Mammary epithelial cell (primary cell): ENCODE measurements at regions of chr1 and their contacts with region 1.

Region 1: DNA sequence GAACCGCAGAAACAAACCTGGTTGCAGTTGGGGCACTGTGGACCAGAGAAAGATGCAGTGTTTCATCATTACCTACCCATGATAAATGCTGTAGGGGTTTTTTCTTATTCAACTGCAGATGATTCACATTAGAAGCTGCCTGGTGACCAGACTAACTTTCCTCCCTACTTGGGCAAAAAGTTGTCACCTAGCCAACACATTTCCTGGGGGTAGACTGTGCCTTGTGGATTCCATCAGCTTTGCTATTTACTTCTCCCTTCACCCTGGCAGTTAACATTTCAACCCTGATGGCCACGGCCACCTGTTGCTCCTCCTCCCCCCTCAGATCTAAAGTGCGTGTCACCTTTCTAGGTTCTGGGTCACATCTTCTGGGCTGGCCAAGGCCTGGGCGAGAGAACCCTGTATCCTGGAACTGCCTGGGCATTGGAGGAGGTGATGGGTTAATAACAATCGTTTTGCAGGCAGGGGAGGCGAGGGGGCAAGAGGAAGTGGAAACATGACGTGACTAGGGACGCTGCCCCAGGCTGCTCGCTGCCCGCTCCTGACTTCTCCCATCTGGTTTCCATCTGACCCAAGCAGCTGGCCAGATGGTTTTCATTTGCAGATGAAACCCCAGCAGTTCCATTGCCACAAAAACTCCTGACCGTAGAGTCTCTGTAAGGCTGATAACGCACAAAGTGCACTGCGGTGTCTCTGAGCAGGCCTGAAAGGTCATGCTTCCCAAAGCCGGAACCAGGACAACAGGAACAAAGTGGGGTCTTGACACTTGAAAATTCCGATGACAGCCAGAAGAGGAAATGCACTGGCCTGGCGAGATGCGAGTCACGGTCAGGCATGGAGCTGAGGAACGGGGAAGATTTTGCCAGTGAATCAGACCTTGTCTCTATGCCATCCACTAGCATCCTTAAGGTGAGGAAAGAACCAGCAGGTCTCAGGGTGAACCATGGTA is 36.6 kb downstream of the CAPZB start:
- DNase-seq: peak; percentile 84
- H3K4me3 ChIP-seq: no peak overlapping the region
- H3K27ac ChIP-seq: peak overlapping the region; percentile 56
- H3K4me1 ChIP-seq: peaks cover 65% of the 10 kb centered on the region
- H3K27me3 ChIP-seq: no peaks in the 10 kb centered on the region
- CTCF ChIP-seq: no peak

Region 2: DNA sequence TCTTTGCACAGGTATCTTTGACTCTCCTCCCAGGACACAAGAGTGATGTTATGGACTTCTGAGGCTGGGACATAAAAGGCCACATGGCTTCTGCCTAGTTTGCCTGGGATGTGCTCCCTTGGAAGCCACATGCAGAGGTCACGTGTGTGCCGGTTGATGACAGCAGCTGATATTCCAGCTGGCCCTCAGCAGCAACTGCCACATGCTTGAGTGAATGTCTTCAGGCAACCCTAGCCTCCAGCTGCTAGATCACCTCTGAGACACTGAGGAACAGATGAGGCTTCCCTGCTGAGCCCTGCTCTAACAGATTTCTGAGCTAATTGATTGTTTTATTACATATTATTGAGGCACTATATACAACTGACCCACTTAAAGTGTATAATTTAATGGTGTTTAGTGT is 148.6 kb before region 1 on chr1:
- CTCF ChIA-PET with region 1: no interaction called
- dilution Hi-C with region 1: no loop called
- in situ Hi-C with region 1: no loop called
- intact Hi-C with region 1: no loop called
- DNase-seq: no peak
- H3K4me3 ChIP-seq: no peak overlapping the region
- H3K27ac ChIP-seq: no peak overlapping the region
- H3K4me1 ChIP-seq: no peaks in the 10 kb centered on the region
- H3K27me3 ChIP-seq: no peaks in the 10 kb centered on the region
- CTCF ChIP-seq: no peak

Region 3: DNA sequence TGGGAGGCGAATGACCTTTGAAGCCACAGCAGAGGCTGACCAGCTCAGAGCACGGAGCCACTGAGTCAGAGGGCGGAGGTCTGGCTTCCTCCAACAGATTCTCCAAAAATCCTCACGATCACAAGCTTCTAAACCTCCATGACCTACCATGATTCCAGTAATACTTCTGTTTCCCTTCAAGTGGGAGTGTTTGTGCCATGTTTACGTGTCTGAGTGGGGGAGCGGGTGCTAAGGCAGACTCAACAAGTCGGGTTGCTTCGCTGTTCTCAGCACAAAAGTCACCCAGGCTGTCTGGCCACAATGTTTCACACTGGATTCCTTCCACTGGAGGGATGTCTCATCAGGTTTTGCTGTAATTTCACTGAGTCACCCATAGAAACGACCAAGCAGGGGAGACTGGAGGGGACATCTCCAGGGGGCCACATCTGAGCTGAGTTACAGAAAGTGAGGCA is 50.4 kb before region 1 on chr1:
- CTCF ChIA-PET with region 1: no interaction called
- dilution Hi-C with region 1: no loop called
- in situ Hi-C with region 1: no loop called
- intact Hi-C with region 1: loop called (anchors 5 kb)
- DNase-seq: peak; percentile 45
- H3K4me3 ChIP-seq: no peak overlapping the region
- H3K27ac ChIP-seq: no peak overlapping the region
- H3K4me1 ChIP-seq: peaks cover 17% of the 10 kb centered on the region
- H3K27me3 ChIP-seq: no peaks in the 10 kb centered on the region
- CTCF ChIP-seq: peak; percentile 21 to 30

Region 4: GRCh38 chr1:19414515-19415121 is 34.1 kb before region 1 on chr1:
- CTCF ChIA-PET with region 1: no interaction called
- dilution Hi-C with region 1: loop called (anchors 5 kb)
- in situ Hi-C with region 1: no loop called
- intact Hi-C with region 1: no loop called
- DNase-seq: no peak
- H3K4me3 ChIP-seq: no peak overlapping the region
- H3K27ac ChIP-seq: no peak overlapping the region
- H3K4me1 ChIP-seq: no peaks in the 10 kb centered on the region
- H3K27me3 ChIP-seq: no peaks in the 10 kb centered on the region
- CTCF ChIP-seq: no peak

Region 5: GRCh38 chr1:19493547-19493946 is 44.8 kb after region 1 on chr1:
- CTCF ChIA-PET with region 1: interaction called, 10 read pairs
- dilution Hi-C with region 1: no loop called
- in situ Hi-C with region 1: no loop called
- intact Hi-C with region 1: no loop called
- DNase-seq: no peak
- H3K4me3 ChIP-seq: no peak overlapping the region
- H3K27ac ChIP-seq: no peak overlapping the region
- H3K4me1 ChIP-seq: no peaks in the 10 kb centered on the region
- H3K27me3 ChIP-seq: no peaks in the 10 kb centered on the region
- CTCF ChIP-seq: no peak

Region 6: GRCh38 chr1:19525607-19526545 is 77.1 kb after region 1 on chr1:
- CTCF ChIA-PET with region 1: no interaction called
- dilution Hi-C with region 1: no loop called
- in situ Hi-C with region 1: no loop called
- intact Hi-C with region 1: no loop called
- DNase-seq: no peak
- H3K4me3 ChIP-seq: no peak overlapping the region
- H3K27ac ChIP-seq: no peak overlapping the region
- H3K4me1 ChIP-seq: no peaks in the 10 kb centered on the region
- H3K27me3 ChIP-seq: no peaks in the 10 kb centered on the region
- CTCF ChIP-seq: no peak

Region 7: DNA sequence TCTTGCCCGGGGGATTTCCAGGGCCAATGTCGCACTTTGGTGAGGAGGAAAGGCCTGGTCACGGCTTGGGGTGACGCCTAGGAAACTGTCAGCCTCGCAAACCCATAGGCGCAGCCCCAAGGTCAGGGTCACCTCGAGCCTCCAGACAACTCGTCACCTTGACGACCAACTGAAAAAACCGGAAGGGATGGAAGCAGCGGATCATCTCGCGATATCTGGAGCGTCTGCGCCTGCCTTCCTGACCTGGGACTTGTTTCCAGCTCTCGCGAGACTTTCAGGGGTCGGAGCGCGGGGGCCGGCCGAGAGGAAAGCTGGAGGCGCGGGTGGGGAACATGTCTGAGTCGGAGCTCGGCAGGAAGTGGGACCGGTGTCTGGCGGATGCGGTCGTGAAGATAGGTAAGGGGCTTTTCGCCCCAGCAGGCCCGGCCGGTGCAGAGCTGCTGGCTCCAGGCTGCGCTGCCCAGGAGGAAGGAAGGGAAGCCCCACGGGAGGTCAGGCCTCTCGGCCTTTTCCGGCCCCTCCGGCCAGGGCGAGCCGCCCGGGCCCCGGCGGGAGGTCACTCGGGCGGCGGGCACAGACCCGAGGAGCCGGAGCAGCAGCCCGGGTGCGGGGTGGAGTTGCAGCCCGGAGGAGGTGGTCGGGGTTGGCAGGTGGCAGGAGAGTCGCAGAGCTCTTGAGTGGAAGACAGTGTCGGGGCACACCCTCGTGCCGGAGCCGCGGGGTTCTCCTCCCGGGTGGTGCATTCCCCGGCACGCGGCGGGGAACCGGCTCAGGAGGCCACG is 148.1 kb after region 1 on chr1:
- CTCF ChIA-PET with region 1: no interaction called
- dilution Hi-C with region 1: loop called (anchors 5 kb)
- in situ Hi-C with region 1: no loop called
- intact Hi-C with region 1: no loop called
- DNase-seq: peak; percentile 97
- H3K4me3 ChIP-seq: peak overlapping the region; percentile 92 to 96 (median 95)
- H3K27ac ChIP-seq: peak overlapping the region; percentile 96
- H3K4me1 ChIP-seq: peaks cover 14% of the 10 kb centered on the region
- H3K27me3 ChIP-seq: no peaks in the 10 kb centered on the region
- CTCF ChIP-seq: no peak